T-cell (primary cell): ENCODE measurements at regions of chr17 and their contacts with region 1.

Region 1: DNA sequence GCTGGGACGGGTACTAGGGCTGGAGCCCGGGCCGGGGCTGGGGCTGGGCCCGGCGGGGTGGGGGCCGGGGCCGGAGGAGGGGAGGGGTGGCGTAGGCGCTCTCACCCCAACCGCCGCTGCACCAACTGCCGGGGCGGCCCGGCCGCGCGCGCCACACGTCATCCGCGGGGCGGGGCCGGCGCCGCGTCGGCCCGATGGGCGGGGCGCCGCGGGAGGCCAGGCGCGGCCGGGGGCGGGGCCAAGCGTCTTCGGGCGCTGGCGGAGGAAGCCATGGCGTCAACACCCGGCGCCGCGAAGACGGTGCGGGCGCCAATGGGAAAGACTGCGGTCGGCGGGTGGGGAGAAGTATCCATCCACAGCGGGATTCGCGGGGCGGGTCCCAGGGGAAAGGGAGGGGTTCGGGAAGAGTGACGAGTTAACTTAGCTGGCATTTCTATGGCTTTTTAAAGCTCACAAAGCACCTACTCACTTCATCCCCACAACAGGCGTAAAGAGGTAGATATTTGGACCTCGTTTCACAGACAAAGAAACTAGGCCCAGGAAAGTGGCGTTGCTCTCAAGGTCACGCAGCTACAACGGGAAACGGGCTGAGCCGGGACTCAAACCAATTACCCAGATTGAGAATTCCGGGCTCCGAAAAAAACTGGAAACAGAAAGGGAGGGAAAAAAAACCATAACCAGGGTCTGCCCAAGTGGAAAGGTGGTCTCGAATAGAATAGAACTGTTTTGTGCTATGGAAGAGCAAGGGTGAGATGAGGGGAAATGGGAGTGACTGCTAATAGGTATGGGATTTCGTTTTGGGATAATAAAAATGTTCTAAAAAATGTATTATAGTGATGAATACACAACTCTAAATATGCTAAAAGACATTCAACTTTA is at the start of gene SPAG9:
- DNase-seq: peak; percentile 73 to 97 (median 84)
- ATAC-seq: peak; percentile 83 to 90 (median 86)
- H3K4me3 ChIP-seq: peak within 1 kb of the TSS; percentile 88 to 98
- H3K4me3 Mint-ChIP-seq: peak within 1 kb of the TSS; percentile 84 to 95 (median 94)
- H3K27ac ChIP-seq: peak within 1 kb of the TSS; percentile 94
- H3K27ac Mint-ChIP-seq: peak within 1 kb of the TSS; percentile 98 to 99
- H3K4me1 ChIP-seq: peaks cover 17 to 36% of the 10 kb centered on the region in 2 experiments
- H3K4me1 Mint-ChIP-seq: peaks cover 46 to 56% (median 53%) of the 10 kb centered on the region in 3 donors
- H3K27me3 ChIP-seq: no peaks in the 10 kb centered on the region
- H3K27me3 Mint-ChIP-seq: no peaks in the 10 kb centered on the region
- total RNA-seq, gene SPAG9: 48.9 to 61.8 (median 51.9) TPM

Region 2: DNA sequence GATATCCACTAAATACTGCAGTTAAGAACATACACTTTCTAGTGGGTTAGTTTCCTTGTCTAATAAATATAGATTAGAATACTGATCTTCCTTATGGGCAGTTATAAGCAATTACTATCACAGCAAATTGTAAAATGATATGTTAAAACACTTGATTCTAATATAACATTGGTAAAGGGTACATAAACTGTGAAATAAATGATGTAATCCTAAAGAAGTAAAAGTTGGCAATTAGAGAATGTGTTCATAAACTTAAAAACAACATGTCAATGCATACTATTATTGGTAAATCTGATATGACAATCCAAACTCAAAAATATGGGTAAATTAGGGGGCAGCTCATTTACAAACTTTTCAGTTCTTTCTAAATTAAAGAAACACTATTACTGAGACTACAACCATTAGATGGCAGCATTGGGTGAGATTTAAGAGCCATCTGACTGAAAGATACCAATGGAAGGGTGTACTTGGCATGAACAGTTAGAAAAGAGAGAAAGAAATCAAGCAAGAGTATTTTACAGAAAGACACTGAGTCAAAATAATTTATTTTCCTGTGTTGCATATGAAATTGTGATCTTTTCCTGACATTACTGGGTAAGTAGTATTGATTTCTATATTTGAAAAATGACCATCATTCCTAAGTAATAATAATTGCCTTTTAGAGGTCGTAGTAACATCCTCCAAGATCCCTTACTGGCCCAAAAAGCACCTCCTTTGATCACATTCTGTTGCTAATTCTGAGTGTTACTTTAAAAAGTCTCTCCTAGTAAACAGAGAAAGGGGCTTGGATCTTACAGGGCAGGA is 119.9 kb before region 1 on chr17:
- CTCF ChIA-PET with region 1: interaction called, 4 to 10 read pairs
- POLR2A ChIA-PET with region 1: no interaction called
- DNase-seq: peak in 13 of 35 experiments; percentile 2 to 82 (median 20)
- ATAC-seq: peak; percentile 57 to 85 (median 77)
- H3K4me3 ChIP-seq: no peak overlapping the region
- H3K4me3 Mint-ChIP-seq: no peak overlapping the region
- H3K27ac ChIP-seq: no peak overlapping the region
- H3K27ac Mint-ChIP-seq: peak overlapping the region in 1 of 2 donors; percentile 29
- H3K4me1 ChIP-seq: no peaks in the 10 kb centered on the region
- H3K4me1 Mint-ChIP-seq: peaks cover 0 to 6% (median 4%) of the 10 kb centered on the region in 3 donors
- H3K27me3 ChIP-seq: no peaks in the 10 kb centered on the region
- H3K27me3 Mint-ChIP-seq: no peaks in the 10 kb centered on the region

Region 3: GRCh38 chr17:51056813-51057510 is 64.0 kb before region 1 on chr17:
- CTCF ChIA-PET with region 1: interaction called, 3 to 4 read pairs
- POLR2A ChIA-PET with region 1: interaction called in 1 of 2 experiments, 15 read pairs
- DNase-seq: peak in 16 of 35 experiments; percentile 6 to 61 (median 19)
- ATAC-seq: peak in 3 of 4 experiments; percentile 43 to 65 (median 44)
- H3K4me3 ChIP-seq: no peak overlapping the region
- H3K4me3 Mint-ChIP-seq: no peak overlapping the region
- H3K27ac ChIP-seq: no peak overlapping the region
- H3K27ac Mint-ChIP-seq: peak overlapping the region; percentile 12 to 73
- H3K4me1 ChIP-seq: no peaks in the 10 kb centered on the region
- H3K4me1 Mint-ChIP-seq: peaks cover 0 to 20% (median 19%) of the 10 kb centered on the region in 3 donors
- H3K27me3 ChIP-seq: no peaks in the 10 kb centered on the region
- H3K27me3 Mint-ChIP-seq: no peaks in the 10 kb centered on the region

Region 4: GRCh38 chr17:51153210-51154072 is 32.5 kb after region 1 on chr17 and contains the start of gene NME1:
- CTCF ChIA-PET with region 1: interaction called in 1 of 2 experiments, 10 read pairs
- POLR2A ChIA-PET with region 1: interaction called, 3 to 6 read pairs
- DNase-seq: peak; percentile 90 to 99 (median 95)
- ATAC-seq: peak; percentile 93 to 96 (median 96)
- H3K4me3 ChIP-seq: peak within 1 kb of the TSS; percentile 87 to 90
- H3K4me3 Mint-ChIP-seq: no peak within 1 kb of the TSS
- H3K27ac ChIP-seq: peak within 1 kb of the TSS; percentile 82
- H3K27ac Mint-ChIP-seq: no peak within 1 kb of the TSS
- H3K4me1 ChIP-seq: peaks cover 11 to 21% of the 10 kb centered on the region in 2 experiments
- H3K4me1 Mint-ChIP-seq: peaks cover 5 to 7% (median 5%) of the 10 kb centered on the region in 3 donors
- H3K27me3 ChIP-seq: no peaks in the 10 kb centered on the region
- H3K27me3 Mint-ChIP-seq: no peaks in the 10 kb centered on the region
- total RNA-seq, gene NME1: 17.7 to 28.0 (median 22.1) TPM

Region 5: DNA sequence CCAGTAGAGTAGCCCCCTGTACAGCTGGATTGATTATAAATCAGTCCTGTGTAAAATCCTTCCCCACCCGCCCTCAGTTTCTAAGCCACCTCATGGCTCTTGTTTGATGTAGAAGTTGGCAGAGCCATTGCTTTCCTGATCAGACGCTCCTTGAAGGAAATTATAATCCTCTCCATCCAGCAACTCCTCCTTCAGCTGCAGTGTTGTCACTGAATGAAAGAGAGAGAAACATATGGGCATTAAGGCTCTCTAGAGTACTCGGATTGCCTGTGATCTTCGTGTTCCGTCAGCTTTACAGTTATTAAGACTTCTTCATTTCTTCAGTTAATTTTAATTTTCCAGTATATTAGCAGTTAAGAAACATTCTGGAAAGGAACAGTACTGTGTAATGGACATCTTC is 59.5 kb after region 1 on chr17:
- CTCF ChIA-PET with region 1: interaction called in 1 of 2 experiments, 12 read pairs
- POLR2A ChIA-PET with region 1: interaction called in 1 of 2 experiments, 8 read pairs
- DNase-seq: no peak
- ATAC-seq: no peak
- H3K4me3 ChIP-seq: no peak overlapping the region
- H3K4me3 Mint-ChIP-seq: no peak overlapping the region
- H3K27ac ChIP-seq: no peak overlapping the region
- H3K27ac Mint-ChIP-seq: peak overlapping the region in 1 of 2 donors; percentile 33
- H3K4me1 ChIP-seq: no peaks in the 10 kb centered on the region
- H3K4me1 Mint-ChIP-seq: no peaks in the 10 kb centered on the region
- H3K27me3 ChIP-seq: no peaks in the 10 kb centered on the region
- H3K27me3 Mint-ChIP-seq: no peaks in the 10 kb centered on the region